CD8-positive, alpha-beta T cell (primary cell): ENCODE measurements at regions of chr1 and their contacts with region 1.

Region 1: DNA sequence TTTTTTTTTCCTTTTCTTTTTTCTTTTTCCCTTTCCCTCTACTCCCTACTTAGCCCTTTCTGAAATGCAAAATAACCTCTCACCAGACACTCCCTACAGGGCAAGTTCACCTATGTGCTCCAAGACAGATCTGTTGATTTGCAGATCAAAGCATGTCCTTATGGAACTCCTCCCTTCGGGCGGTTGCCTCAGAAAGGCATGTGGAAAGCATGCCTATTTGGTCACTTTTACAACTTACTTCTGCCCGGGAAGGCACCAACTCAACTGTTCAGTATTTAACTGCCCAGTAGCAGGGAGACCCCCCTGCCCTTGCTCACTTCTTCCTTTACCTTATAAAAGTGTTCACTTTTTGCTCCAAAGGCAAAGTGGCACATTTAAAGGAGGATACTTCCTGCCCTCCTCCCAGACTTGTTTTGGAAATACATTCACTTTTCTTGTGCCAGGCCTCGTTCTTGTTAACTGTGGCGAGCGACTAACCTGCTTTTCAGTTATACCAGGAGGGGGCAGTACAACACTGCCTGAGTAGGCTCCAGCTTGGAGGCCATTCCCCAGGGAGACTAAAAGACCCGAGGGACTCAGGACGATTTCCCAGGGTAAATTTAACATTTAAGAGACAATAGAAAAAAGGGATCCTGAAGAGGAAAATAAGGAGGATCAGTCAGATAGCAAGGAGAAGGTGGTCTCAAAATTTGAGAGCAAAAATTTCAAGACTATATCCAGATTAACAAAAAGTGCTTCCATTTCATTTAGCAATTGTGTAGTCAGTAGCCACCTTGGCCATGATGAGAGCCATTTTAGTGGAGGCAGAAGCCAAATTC is 12.3 kb upstream of the SLAMF7 start:
- DNase-seq: peak; percentile 29 to 89 (median 63)
- ATAC-seq: peak; percentile 86
- H3K4me3 ChIP-seq: no peak overlapping the region
- H3K4me3 Mint-ChIP-seq: no peak overlapping the region
- H3K27ac ChIP-seq: peak overlapping the region in 1 of 2 experiments; percentile 22
- H3K27ac Mint-ChIP-seq: no peak overlapping the region
- H3K4me1 ChIP-seq: peaks cover 21% of the 10 kb centered on the region
- H3K4me1 Mint-ChIP-seq: peaks cover 16% of the 10 kb centered on the region
- H3K27me3 ChIP-seq: no peaks in the 10 kb centered on the region
- H3K27me3 Mint-ChIP-seq: no peaks in the 10 kb centered on the region
- CTCF ChIP-seq: peak; percentile 99

Region 2: GRCh38 chr1:160711602-160712311 is 14.9 kb before region 1 on chr1 and contains the start of gene CD48:
- CTCF ChIA-PET with region 1: interaction called, 59 read pairs
- POLR2A ChIA-PET with region 1: interaction called, 10 read pairs
- intact Hi-C with region 1: loop called in 1 of 2 experiments (anchors 1 kb)
- DNase-seq: peak in 7 of 9 experiments; percentile 37 to 89 (median 67)
- ATAC-seq: peak; percentile 32
- H3K4me3 ChIP-seq: peak within 1 kb of the TSS; percentile 84 to 89
- H3K4me3 Mint-ChIP-seq: no peak within 1 kb of the TSS
- H3K27ac ChIP-seq: peak within 1 kb of the TSS; percentile 76 to 93
- H3K27ac Mint-ChIP-seq: no peak within 1 kb of the TSS
- H3K4me1 ChIP-seq: peaks cover 58% of the 10 kb centered on the region
- H3K4me1 Mint-ChIP-seq: peaks cover 46% of the 10 kb centered on the region
- H3K27me3 ChIP-seq: no peaks in the 10 kb centered on the region
- H3K27me3 Mint-ChIP-seq: no peaks in the 10 kb centered on the region
- CTCF ChIP-seq: no peak
- total RNA-seq, gene CD48: 397 to 399 TPM

Region 3: DNA sequence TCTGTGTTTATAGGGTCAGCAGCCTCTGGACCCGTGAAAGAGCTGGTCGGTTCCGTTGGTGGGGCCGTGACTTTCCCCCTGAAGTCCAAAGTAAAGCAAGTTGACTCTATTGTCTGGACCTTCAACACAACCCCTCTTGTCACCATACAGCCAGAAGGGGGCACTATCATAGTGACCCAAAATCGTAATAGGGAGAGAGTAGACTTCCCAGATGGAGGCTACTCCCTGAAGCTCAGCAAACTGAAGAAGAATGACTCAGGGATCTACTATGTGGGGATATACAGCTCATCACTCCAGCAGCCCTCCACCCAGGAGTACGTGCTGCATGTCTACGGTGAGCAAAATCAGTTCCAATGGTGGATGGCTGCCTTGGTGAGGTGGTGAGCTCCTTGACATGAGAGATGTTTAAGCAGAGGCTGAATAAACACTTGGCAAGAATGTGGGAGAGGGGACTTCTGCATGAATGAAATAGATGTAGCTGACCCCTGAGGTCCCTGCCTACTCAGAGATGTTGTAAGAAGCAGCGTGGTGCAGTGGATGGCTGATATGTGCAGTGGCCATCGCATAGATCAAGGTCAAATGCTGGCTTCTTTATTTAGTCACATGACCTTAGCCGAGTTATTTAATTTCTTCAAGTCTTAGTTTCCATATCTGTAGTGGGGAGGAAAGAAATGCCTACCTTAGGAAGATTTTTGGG is 21.6 kb after region 1 on chr1:
- CTCF ChIA-PET with region 1: interaction called, 13 read pairs
- POLR2A ChIA-PET with region 1: interaction called, 3 read pairs
- intact Hi-C with region 1: loop called in 1 of 2 experiments (anchors 2 kb)
- DNase-seq: no peak
- ATAC-seq: no peak
- H3K4me3 ChIP-seq: no peak overlapping the region
- H3K4me3 Mint-ChIP-seq: no peak overlapping the region
- H3K27ac ChIP-seq: peak overlapping the region in 1 of 2 experiments; percentile 38
- H3K27ac Mint-ChIP-seq: peak overlapping the region; percentile 24
- H3K4me1 ChIP-seq: peaks cover 72% of the 10 kb centered on the region
- H3K4me1 Mint-ChIP-seq: peaks cover 86% of the 10 kb centered on the region
- H3K27me3 ChIP-seq: no peaks in the 10 kb centered on the region
- H3K27me3 Mint-ChIP-seq: no peaks in the 10 kb centered on the region
- CTCF ChIP-seq: no peak

Region 4: GRCh38 chr1:160768295-160768657 is 41.6 kb after region 1 on chr1:
- CTCF ChIA-PET with region 1: interaction called, 279 read pairs
- POLR2A ChIA-PET with region 1: interaction called, 9 read pairs
- intact Hi-C with region 1: loop called (anchors 1 kb)
- DNase-seq: peak; percentile 72 to 94 (median 85)
- ATAC-seq: peak; percentile 92
- H3K4me3 ChIP-seq: peak overlapping the region; percentile 31 to 41
- H3K4me3 Mint-ChIP-seq: peak overlapping the region; percentile 82
- H3K27ac ChIP-seq: peak overlapping the region; percentile 33 to 85
- H3K27ac Mint-ChIP-seq: peak overlapping the region; percentile 96
- H3K4me1 ChIP-seq: peaks cover 18% of the 10 kb centered on the region
- H3K4me1 Mint-ChIP-seq: peaks cover 20% of the 10 kb centered on the region
- H3K27me3 ChIP-seq: no peaks in the 10 kb centered on the region
- H3K27me3 Mint-ChIP-seq: no peaks in the 10 kb centered on the region
- CTCF ChIP-seq: peak; percentile 92

Region 5: DNA sequence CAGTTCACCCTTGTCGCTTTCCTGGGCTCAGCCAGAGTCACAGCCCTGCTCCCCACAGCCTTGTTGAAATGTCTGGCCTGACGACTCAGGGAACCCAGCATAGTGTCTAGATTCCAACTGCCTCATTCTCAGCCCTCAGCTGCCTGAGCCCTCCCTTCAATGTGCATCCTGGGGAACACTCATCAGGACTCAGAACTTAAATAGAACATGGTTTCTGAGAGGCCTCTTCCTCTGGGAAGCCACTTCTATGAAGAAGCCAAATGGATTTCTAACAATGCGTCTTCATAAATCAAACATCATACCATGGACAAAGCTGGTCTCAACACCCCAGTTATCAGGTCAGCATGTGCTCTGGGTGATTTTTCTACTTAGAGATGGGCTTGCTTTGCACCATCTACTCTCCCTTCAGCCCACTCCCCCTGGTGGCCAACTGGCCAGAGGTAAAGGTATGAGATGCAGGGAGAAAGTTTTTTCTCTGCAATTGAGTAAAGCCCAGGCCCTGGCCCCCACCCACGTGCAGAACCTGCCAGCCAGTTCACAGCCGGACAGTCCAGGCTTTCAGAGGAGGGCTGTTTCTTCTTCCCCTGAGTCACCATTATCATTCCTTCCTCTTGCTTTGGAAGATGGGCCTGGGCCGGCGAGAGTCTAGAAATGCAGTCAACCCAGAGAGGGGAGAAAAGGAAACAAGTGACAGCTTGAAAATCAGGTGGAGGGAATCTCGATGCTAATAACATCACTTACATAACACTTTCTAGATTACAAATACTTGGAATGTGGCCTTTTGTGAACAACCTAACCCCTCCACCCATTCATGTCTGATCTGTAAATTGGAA is 103.8 kb after region 1 on chr1:
- CTCF ChIA-PET with region 1: interaction called, 54 read pairs
- POLR2A ChIA-PET with region 1: interaction called, 3 read pairs
- intact Hi-C with region 1: loop called (anchors 1 kb)
- DNase-seq: peak; percentile 52 to 87 (median 80)
- ATAC-seq: peak; percentile 70
- H3K4me3 ChIP-seq: no peak overlapping the region
- H3K4me3 Mint-ChIP-seq: no peak overlapping the region
- H3K27ac ChIP-seq: peak overlapping the region in 1 of 2 experiments; percentile 15
- H3K27ac Mint-ChIP-seq: peak overlapping the region; percentile 86
- H3K4me1 ChIP-seq: peaks cover 25% of the 10 kb centered on the region
- H3K4me1 Mint-ChIP-seq: peaks cover 58% of the 10 kb centered on the region
- H3K27me3 ChIP-seq: no peaks in the 10 kb centered on the region
- H3K27me3 Mint-ChIP-seq: no peaks in the 10 kb centered on the region
- CTCF ChIP-seq: peak; percentile 73

Region 6: GRCh38 chr1:160877221-160877620 is 150.5 kb after region 1 on chr1:
- CTCF ChIA-PET with region 1: interaction called, 9 read pairs
- POLR2A ChIA-PET with region 1: no interaction called
- intact Hi-C with region 1: loop called (anchors 1 kb)
- DNase-seq: peak in 3 of 9 experiments; percentile 21 to 78 (median 67)
- ATAC-seq: peak; percentile 86
- H3K4me3 ChIP-seq: no peak overlapping the region
- H3K4me3 Mint-ChIP-seq: no peak overlapping the region
- H3K27ac ChIP-seq: no peak overlapping the region
- H3K27ac Mint-ChIP-seq: peak overlapping the region; percentile 0
- H3K4me1 ChIP-seq: peaks cover 11% of the 10 kb centered on the region
- H3K4me1 Mint-ChIP-seq: peaks cover 27% of the 10 kb centered on the region
- H3K27me3 ChIP-seq: no peaks in the 10 kb centered on the region
- H3K27me3 Mint-ChIP-seq: no peaks in the 10 kb centered on the region
- CTCF ChIP-seq: peak; percentile 62